Left colon (tissue), 2 donors: ENCODE measurements at regions of chr15 and their contacts with region 1.

Region 1: GRCh38 chr15:63288778-63289378 is 11.5 kb downstream of the APH1B start:
- DNase-seq: no peak
- ATAC-seq: peak; percentile 78

Region 2: DNA sequence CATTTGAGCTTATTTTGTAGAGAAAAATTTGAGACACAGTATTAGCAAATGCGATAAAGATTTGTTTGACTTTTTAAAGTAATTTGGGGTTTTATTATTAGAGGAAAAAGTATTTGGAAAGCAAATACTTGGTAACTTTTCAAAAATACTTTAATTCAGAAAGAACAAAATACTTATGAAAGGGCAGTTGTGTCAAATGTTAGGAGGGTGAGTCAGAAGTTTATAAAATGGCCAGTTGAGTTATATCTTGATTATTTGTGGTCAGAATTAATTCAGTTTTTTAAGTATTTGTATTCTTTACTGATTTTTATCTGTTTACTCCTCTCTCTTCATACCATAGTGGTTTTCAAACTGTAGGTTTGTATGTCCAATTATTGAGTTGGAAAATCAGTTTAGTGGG is 155.1 kb before region 1 on chr15:
- intact Hi-C with region 1: no loop called
- DNase-seq: no peak
- ATAC-seq: no peak

Region 3: GRCh38 chr15:63402498-63403253 is 113.8 kb after region 1 on chr15:
- intact Hi-C with region 1: loop called in 1 of 2 experiments (anchors 2 kb)
- DNase-seq: no peak
- ATAC-seq: peak; percentile 62